Dendritic cell treated with granulocyte-macrophage colony-stimulating factor and Interleukin-4, amounts not matched to agents 40 ng/mL and 50 ng/mL, for 4 days (primary cell): ENCODE measurements at regions of chr14 and their contacts with region 1.

Region 1: DNA sequence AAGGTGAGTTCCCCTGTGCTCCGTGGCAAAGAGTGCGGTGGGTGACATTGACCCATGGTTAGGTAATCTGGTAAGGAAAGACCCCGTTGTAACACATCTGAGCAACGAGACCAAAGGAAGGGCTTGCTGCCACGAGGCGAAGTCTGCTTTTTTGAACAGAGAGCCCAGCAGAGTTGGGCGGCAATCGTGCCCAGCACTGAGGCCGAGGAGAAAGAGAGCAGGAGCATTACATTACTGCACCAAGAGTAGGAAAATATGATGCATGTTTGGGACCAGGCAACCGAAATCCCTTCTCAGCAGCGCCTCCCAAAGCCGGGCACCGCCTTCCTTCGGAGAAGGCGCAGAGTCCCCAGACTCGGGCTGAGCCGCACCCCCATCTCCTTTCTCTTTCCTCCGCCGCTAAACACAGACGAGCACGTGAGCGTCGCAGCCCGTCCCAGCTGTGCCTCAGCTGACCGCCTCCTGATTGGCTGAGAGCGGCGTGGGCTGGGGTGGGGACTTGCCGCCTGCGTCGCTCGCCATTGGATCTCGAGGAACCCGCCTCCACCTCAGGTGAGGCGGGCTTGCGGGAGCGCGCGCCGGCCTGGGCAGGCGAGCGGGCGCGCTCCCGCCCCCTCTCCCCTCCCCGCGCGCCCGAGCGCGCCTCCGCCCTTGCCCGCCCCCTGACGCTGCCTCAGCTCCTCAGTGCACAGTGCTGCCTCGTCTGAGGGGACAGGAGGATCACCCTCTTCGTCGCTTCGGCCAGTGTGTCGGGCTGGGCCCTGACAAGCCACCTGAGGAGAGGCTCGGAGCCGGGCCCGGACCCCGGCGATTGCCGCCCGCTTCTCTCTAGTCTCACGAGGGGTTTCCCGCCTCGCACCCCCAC is at the start of gene HIF1A:
- H3K4me3 Mint-ChIP-seq: peak within 1 kb of the TSS; percentile 97
- H3K27ac Mint-ChIP-seq: peak within 1 kb of the TSS; percentile 97
- H3K4me1 Mint-ChIP-seq: peaks cover 22% of the 10 kb centered on the region
- H3K27me3 Mint-ChIP-seq: peaks cover 1% of the 10 kb centered on the region

Region 2: GRCh38 chr14:61475316-61475715 is 219.7 kb before region 1 on chr14:
- intact Hi-C with region 1: loop called (anchors 2 kb)
- H3K4me3 Mint-ChIP-seq: no peak overlapping the region
- H3K27ac Mint-ChIP-seq: no peak overlapping the region
- H3K4me1 Mint-ChIP-seq: peaks cover 72% of the 10 kb centered on the region
- H3K27me3 Mint-ChIP-seq: no peaks in the 10 kb centered on the region

Region 3: GRCh38 chr14:61569783-61570182 is 125.3 kb before region 1 on chr14:
- intact Hi-C with region 1: loop called (anchors 5 kb)
- H3K4me3 Mint-ChIP-seq: peak overlapping the region; percentile 76
- H3K27ac Mint-ChIP-seq: peak overlapping the region; percentile 90
- H3K4me1 Mint-ChIP-seq: peaks cover 91% of the 10 kb centered on the region
- H3K27me3 Mint-ChIP-seq: no peaks in the 10 kb centered on the region

Region 4: GRCh38 chr14:61662437-61663311 is 32.4 kb before region 1 on chr14:
- intact Hi-C with region 1: loop called (anchors 5 kb)
- H3K4me3 Mint-ChIP-seq: no peak overlapping the region
- H3K27ac Mint-ChIP-seq: peak overlapping the region; percentile 70
- H3K4me1 Mint-ChIP-seq: peaks cover 43% of the 10 kb centered on the region
- H3K27me3 Mint-ChIP-seq: no peaks in the 10 kb centered on the region